GM10248 (cell line): ENCODE measurements at regions of chr3 and their contacts with region 1.

Region 1: GRCh38 chr3:196251918-196252317 is 35.6 kb downstream of the SLC51A start:
- DNase-seq: no peak
- CTCF ChIP-seq: no peak

Region 2: GRCh38 chr3:196081791-196082618 is 169.9 kb before region 1 on chr3 and contains the start of gene TFRC:
- CTCF ChIA-PET with region 1: no interaction called
- POLR2A ChIA-PET with region 1: no interaction called
- DNase-seq: peak; percentile 100
- CTCF ChIP-seq: no peak

Region 3: DNA sequence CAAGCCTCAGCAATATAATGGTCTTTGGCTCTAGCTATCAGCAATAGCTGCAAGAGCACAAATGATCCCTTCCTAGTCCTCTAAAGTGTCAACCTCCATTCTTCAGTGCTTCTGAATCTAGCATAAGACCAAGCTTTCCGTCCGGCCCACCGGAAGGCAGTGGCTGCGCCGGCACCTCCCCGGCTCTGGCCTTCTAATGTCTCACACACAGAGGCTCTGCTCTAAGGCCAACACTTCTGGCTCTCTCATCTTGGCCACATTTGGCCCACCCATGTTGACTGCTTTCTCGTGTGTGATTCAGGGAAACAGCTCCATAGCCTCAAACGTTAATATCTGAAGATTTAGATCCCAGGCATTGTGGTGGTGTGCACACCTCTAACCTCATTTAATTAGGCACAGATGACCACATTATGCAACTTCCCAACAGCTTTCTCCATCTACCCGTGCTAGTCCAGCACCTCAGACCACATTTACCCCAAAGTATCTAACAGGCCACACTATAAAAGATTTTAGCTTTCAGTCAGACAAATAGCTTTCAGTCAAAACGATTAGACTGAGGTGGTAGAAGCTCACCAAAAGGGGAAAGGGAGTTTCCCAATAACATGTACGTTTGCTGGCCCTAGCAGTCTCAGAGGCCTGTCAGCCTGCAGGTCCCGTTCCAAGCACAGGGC is 16.3 kb before region 1 on chr3:
- CTCF ChIA-PET with region 1: interaction called, 18 read pairs
- POLR2A ChIA-PET with region 1: no interaction called
- DNase-seq: no peak
- CTCF ChIP-seq: no peak

Region 4: DNA sequence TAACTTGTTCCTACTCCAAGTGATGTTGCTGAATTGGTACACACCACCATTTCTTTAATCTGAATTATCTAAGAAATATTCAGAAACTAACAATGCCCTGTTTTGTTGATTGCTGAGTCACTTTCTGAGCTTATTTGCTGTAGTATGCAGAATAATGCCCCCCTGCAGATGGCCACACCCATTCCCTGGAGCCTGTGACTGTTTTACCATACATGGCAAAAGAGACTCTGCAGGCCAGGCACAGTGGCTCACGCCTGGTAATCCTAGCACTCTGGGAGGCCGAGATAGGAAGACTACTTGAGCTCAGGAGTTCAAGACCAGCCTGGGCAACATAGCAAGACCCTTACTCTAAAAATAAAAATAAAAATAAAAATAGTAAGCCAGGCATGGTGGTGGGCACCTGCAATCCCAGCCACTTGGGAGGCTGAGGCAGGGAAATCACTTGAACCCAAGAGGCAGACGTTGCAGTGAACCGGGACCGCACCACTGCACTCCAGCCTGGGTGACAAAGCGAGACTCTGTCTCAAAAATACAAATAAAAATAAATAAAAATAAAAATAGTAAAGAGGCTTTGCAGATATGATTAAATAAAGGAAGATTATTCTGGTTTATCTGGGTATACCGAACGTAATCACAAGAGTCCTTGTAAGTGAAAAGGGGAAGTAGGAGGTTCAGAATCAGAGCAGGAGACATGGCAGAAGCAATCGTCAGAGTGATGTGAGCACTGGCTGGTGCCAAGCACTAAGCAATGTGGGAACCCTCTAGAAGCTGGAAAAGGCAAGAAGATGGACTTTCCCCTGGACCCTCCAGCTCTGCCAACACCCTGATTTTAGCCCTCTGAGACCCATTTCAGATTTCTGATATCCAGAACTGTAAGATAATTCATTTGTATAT is 16.6 kb after region 1 on chr3:
- CTCF ChIA-PET with region 1: interaction called, 16 read pairs
- POLR2A ChIA-PET with region 1: no interaction called
- DNase-seq: no peak
- CTCF ChIP-seq: no peak

Region 5: GRCh38 chr3:196280689-196281440 is 28.9 kb after region 1 on chr3:
- CTCF ChIA-PET with region 1: interaction called, 22 read pairs
- POLR2A ChIA-PET with region 1: no interaction called
- DNase-seq: peak; percentile 48
- CTCF ChIP-seq: no peak

Region 6: GRCh38 chr3:196298521-196298920 is 46.6 kb after region 1 on chr3:
- CTCF ChIA-PET with region 1: interaction called, 11 read pairs
- POLR2A ChIA-PET with region 1: no interaction called
- DNase-seq: no peak
- CTCF ChIP-seq: no peak

Region 7: GRCh38 chr3:196388956-196389355 is 137.0 kb after region 1 on chr3:
- CTCF ChIA-PET with region 1: no interaction called
- POLR2A ChIA-PET with region 1: no interaction called
- DNase-seq: no peak
- CTCF ChIP-seq: no peak